BJ (cell line): ENCODE measurements at regions of chr3 and their contacts with region 1.

Region 1: GRCh38 chr3:16290007-16290826 is 25.2 kb downstream of the OXNAD1 start:
- DNase-seq: peak; percentile 7
- H3K4me3 ChIP-seq: no peak overlapping the region
- H3K27me3 ChIP-seq: no peaks in the 10 kb centered on the region
- CTCF ChIP-seq: peak; percentile 78

Region 2: DNA sequence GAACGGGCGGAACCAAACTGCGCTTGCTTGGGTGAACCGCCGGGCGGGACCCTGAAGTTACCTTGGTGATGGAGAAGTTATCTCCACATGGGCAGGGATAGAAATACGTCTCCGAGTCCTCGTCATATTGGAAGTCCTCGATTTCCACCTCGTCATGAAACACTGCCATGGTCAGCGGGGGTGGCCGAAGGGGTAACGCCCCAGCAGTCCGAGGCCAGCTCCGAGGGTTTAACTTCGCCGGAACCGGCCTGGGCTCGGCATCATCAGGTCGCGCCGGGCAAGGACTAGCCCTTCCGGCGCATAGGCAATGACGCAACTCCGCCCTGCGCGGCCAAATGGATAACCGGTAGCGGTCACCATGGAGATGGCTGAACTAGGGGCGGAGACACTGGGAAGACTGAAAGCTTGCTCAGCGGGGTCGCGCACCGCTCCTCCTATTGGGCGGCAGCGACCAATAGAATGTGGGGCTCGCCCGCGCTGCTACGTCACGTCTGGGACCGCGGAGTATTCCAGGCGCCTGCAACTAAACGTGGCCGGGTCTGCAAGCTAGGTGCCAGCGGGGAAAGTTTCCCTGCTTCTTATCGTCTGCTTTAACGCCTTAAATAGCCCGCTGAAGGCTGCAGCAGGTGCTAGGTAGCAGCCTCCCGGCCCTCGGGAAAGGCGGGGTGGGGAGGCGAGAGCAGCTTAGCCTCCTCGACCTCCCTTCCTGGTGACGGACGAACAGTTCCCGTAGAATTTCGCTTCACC is 25.3 kb before region 1 on chr3 and contains the starts of genes DPH3 and OXNAD1:
- CTCF ChIA-PET with region 1: interaction called, 16 read pairs
- POLR2A ChIA-PET with region 1: no interaction called
- DNase-seq: peak; percentile 93
- H3K4me3 ChIP-seq: peak within 1 kb of the TSS; percentile 96
- H3K27me3 ChIP-seq: no peaks in the 10 kb centered on the region
- CTCF ChIP-seq: no peak
- polyA plus RNA-seq, gene DPH3: 11.4 and 18.2 TPM in 2 replicates
- polyA plus RNA-seq, gene OXNAD1: 8.9 and 11.4 TPM in 2 replicates

Region 3: DNA sequence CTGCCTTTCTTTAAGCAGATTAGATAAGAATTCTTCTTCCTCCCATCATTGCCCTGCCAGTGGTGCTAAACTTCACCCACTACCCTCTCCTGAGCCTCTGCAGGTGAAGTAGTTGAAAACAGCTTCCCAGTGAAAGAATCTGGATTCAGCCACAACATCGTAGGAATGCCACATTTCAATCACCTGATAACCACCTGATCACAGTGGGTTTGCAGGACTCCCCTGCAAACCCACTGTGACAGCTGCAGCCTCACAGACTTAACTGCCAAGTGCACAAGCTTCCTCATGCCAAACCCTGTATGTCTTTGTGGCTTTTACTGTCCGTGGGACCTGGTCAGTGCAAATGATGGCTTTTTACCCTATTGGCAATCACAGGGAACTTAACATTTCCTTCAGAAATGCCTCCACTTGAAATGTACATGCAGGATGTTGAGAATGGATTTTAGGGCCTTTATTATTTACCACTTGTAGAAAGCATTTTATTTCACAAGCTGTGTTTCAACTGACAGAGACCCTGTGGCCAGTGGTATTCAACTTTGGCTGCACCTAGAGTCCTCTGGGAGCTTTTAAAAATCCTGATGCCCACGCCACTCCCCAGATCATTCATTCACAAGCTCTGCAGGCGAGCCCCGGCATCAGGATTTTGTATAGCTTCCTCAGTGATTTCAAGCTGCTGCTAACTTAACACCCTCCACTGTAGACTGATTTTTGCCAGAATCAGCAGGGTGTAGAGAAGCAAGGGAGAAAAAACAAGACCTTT is 23.8 kb after region 1 on chr3:
- CTCF ChIA-PET with region 1: interaction called, 11 read pairs
- POLR2A ChIA-PET with region 1: no interaction called
- DNase-seq: no peak
- H3K4me3 ChIP-seq: no peak overlapping the region
- H3K27me3 ChIP-seq: no peaks in the 10 kb centered on the region
- CTCF ChIP-seq: no peak

Region 4: DNA sequence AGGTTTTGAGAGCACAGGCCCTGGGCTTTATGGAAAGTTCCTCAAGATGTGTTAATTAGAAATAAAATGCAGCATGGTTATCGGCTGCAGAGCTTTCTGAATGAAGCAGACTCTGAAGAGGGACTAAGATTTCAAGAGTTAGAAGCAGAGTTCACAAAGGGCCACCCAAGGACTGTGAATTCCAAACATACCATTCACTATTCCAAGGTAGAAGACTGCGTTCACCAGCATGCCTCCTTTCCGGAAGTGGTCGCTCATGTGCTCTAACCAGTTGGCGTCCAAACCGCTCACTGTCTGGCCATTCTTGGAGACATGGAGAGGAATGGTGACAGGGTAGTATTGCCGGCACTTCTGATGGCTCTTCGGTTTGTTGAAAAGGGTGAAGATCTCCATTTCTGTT is 79.7 kb after region 1 on chr3:
- CTCF ChIA-PET with region 1: no interaction called
- POLR2A ChIA-PET with region 1: no interaction called
- DNase-seq: no peak
- H3K4me3 ChIP-seq: no peak overlapping the region
- H3K27me3 ChIP-seq: no peaks in the 10 kb centered on the region
- CTCF ChIP-seq: no peak

Region 5: GRCh38 chr3:16516695-16517481 is 226.7 kb after region 1 on chr3:
- CTCF ChIA-PET with region 1: interaction called, 59 read pairs
- POLR2A ChIA-PET with region 1: interaction called, 3 read pairs
- DNase-seq: no peak
- H3K4me3 ChIP-seq: no peak overlapping the region
- H3K27me3 ChIP-seq: peaks cover 3% of the 10 kb centered on the region
- CTCF ChIP-seq: peak; percentile 77

Region 6: DNA sequence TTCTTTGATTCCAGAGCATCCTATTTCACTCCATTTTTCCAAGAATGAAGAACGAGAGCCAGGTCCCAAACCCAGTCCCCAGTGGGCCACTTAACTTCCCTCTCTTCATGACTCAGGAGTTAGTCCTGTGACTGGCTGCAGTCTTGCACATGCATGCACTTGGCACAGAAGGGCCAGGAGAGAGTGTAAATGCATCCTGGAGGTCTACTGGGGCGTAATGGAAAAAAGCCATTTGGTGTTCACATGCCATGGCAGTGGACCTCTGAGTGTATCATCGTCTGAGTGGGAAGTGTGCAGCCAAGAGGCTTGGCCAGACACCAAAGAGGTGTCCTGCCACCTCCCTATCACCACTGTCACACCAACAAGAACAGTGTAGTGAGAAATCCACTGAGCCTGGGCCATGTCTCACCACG is 238.4 kb after region 1 on chr3:
- CTCF ChIA-PET with region 1: interaction called, 18 read pairs
- POLR2A ChIA-PET with region 1: no interaction called
- DNase-seq: no peak
- H3K4me3 ChIP-seq: no peak overlapping the region
- H3K27me3 ChIP-seq: peaks cover 19% of the 10 kb centered on the region
- CTCF ChIP-seq: no peak

Region 7: GRCh38 chr3:16550676-16551341 is 260.6 kb after region 1 on chr3:
- CTCF ChIA-PET with region 1: interaction called, 56 read pairs
- POLR2A ChIA-PET with region 1: no interaction called
- DNase-seq: peak; percentile 49
- H3K4me3 ChIP-seq: no peak overlapping the region
- H3K27me3 ChIP-seq: peaks cover 8% of the 10 kb centered on the region
- CTCF ChIP-seq: peak; percentile 78